ENCODE measurements at regions of chr11 and their contacts with region 1.

Region 1: GRCh38 chr11:65418711-65419459 is 3.7 kb upstream of the NEAT1 start:
- DNase-seq: peak; percentile 90
- H3K4me3 Mint-ChIP-seq: peak overlapping the region; percentile 98
- H3K27ac Mint-ChIP-seq: peak overlapping the region; percentile 100
- H3K4me1 Mint-ChIP-seq: peaks cover 39% of the 10 kb centered on the region
- H3K27me3 Mint-ChIP-seq: no peaks in the 10 kb centered on the region

Region 2: GRCh38 chr11:65261591-65262380 is 157.1 kb before region 1 on chr11 and contains the start of gene POLA2:
- intact Hi-C with region 1: no loop called
- DNase-seq: peak; percentile 97
- H3K4me3 Mint-ChIP-seq: peak within 1 kb of the TSS; percentile 87
- H3K27ac Mint-ChIP-seq: peak within 1 kb of the TSS; percentile 81
- H3K4me1 Mint-ChIP-seq: peaks cover 35% of the 10 kb centered on the region
- H3K27me3 Mint-ChIP-seq: no peaks in the 10 kb centered on the region
- total RNA-seq, gene POLA2: 74.5 and 74.6 TPM in 2 replicates

Region 3: GRCh38 chr11:65382033-65382807 is 36.7 kb before region 1 on chr11 and contains the start of gene SLC25A45:
- intact Hi-C with region 1: loop called (anchors 1 kb)
- DNase-seq: peak; percentile 90
- H3K4me3 Mint-ChIP-seq: peak within 1 kb of the TSS; percentile 86
- H3K27ac Mint-ChIP-seq: peak within 1 kb of the TSS; percentile 99
- H3K4me1 Mint-ChIP-seq: peaks cover 40% of the 10 kb centered on the region
- H3K27me3 Mint-ChIP-seq: no peaks in the 10 kb centered on the region
- total RNA-seq, gene SLC25A45: 14.6 and 16.3 TPM in 2 replicates

Region 4: GRCh38 chr11:65429724-65430405 is 11.0 kb after region 1 on chr11:
- intact Hi-C with region 1: loop called (anchors 1 kb)
- DNase-seq: no peak
- H3K4me3 Mint-ChIP-seq: peak overlapping the region; percentile 98
- H3K27ac Mint-ChIP-seq: peak overlapping the region; percentile 94
- H3K4me1 Mint-ChIP-seq: peaks cover 78% of the 10 kb centered on the region
- H3K27me3 Mint-ChIP-seq: no peaks in the 10 kb centered on the region

Region 5: DNA sequence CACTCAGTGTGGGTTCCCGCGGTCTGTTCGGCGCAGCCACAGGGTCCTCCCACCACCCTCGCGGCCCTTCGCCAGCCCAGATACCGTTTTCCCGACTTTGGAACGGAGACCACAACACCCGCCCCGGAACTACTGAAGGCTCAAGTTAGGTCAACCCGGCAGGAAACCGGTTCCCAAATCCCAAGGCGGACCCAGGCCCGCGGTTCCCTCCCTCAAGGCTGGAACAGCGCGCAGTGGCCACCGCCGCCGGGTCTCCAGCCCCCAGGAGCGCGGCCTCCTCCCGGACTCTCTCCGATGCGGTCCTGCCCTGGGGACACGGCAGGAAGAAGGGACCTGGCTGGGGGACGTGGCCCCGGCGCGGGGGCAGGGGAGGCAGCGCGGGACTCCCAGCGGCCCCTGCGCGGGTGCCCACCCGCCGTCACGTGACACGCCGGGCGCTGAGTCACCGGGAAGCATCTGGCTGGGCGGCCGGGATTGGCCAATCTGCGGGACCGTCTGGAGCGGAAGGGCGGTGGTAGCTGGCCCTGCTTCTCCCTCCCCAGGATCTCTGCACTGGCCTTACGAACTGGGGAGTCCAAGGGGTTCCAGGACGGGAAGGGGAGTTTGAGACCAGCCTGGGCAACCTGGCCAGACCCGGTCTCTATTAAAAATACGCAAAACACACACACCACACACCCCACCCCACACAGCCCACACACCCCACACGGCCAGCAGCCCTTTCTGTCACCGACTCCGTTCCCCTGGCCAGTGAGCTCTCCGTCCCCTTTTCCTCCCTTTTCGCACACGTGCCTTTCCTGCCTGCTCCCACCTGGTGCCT is 58.5 kb after region 1 on chr11:
- intact Hi-C with region 1: loop called (anchors 1 kb)
- DNase-seq: peak; percentile 87
- H3K4me3 Mint-ChIP-seq: peak overlapping the region; percentile 100
- H3K27ac Mint-ChIP-seq: peak overlapping the region; percentile 100
- H3K4me1 Mint-ChIP-seq: peaks cover 8% of the 10 kb centered on the region
- H3K27me3 Mint-ChIP-seq: no peaks in the 10 kb centered on the region

Region 6: DNA sequence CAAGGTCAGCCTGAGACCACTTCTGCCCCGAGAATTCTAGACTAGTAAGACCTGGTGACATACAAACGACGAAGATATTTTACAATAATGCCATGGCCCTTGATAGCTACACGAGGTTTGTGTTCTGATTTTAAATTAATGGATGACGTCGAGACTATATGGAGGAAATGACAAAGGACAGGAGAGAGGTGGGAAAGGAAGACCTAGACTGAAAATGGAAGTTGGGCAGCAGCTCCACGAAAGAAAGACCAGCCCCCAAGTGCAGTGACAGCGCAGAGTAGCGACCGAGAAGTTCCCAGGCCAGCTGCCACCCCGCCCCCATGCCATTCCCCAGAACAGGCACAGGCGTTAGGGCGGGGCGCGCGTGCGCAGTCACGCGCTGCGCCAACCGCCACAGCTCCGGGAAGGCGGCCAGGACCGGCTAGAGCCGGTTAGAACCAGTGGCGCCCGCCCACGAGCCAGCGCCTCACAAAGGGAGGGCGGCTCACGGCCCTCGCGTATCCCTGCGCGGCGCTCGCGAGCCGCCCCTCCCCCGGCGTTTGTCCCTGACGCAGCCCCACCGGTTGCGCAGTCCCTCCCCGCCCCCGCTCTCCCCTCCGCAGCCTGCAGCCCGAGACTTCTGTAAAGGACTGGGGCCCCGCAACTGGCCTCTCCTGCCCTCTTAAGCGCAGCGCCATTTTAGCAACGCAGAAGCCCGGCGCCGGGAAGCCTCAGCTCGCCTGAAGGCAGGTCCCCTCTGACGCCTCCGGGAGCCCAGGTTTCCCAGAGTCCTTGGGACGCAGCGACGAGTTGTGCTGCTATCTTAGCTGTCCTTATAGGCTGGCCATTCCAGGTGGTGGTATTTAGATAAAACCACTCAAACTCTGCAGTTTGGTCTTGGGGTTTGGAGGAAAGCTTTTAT is 78.5 kb after region 1 on chr11:
- intact Hi-C with region 1: loop called (anchors 1 kb)
- DNase-seq: peak; percentile 97
- H3K4me3 Mint-ChIP-seq: no peak overlapping the region
- H3K27ac Mint-ChIP-seq: peak overlapping the region; percentile 88
- H3K4me1 Mint-ChIP-seq: peaks cover 30% of the 10 kb centered on the region
- H3K27me3 Mint-ChIP-seq: no peaks in the 10 kb centered on the region

Region 7: DNA sequence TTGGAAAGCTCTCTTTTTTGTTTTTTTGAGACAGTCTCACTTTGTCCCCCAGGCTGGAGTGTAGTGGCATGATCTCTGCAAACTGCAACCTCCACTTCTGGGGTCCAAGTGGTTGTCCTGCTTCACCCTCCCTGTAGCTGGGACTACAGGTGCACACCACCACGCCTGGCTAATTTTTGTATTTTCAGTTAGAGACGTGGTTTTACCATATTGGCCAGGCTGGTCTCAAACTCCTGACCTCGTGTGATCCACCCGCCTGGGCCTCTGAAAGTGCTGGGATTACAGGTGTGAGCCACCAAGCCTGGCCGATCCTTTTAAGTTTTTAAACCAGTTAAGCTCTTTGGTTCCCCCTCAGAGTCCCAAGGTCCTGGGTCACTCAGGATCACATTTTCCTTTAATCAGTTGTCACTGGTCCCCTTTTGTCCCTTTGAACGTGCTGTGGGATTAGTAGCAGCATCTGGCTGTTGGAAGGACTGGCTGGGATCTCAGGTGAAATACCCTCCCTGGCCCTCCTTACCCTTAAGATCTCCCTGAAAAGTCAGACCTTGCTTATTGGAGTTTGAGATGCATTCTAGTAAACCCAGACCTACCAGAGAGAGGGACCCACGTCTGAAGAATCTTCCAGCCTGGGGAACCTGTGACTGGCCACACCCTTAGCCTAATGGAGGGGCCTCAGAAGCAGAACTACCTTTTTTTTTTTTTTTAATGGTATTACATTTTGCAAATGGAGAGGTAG is 88.1 kb after region 1 on chr11:
- intact Hi-C with region 1: loop called (anchors 1 kb)
- DNase-seq: no peak
- H3K4me3 Mint-ChIP-seq: peak overlapping the region; percentile 49
- H3K27ac Mint-ChIP-seq: peak overlapping the region; percentile 59
- H3K4me1 Mint-ChIP-seq: peaks cover 43% of the 10 kb centered on the region
- H3K27me3 Mint-ChIP-seq: no peaks in the 10 kb centered on the region